HEK293 (cell line): ENCODE measurements at regions of chr11 and their contacts with region 1.

Region 1: DNA sequence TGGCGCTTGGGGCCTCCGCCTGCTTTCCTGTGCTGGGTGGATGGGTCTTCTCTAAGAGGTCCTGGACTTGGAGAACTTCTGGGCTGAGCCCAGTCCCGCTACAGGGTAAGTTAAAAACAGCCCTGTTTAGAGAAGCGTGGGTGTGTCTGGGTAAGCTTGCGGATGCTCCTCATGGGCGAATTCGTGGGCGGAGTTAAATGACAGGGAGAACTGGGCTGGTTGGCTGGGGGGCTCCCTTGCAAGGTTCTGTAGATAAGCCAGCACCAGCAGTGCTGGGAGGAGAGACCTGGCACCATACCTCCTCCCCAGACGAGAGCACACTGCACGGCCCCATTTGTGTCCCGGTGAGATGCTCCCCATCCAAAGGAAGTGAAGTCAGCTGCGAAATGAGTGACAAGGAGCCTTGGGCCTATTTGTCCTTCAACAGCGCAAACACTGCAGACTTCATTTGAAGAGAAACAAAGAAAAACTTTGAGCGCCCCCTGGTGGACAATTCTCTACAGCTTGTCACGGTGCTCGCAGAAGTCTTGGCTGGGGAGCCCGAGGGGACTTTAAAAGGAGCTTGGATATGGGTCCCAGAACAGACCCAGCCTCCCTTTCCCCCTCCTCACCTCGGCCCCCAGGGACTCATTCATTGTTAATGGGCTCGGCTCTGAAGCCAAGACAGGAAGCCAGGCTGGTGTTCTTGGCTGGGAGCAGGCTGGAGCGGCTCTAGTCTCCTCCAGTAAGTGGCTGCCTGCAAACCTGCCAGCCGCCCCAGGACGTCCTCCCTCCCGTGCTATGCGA is 39.5 kb downstream of the TP53I11 start:
- H3K4me3 ChIP-seq: no peak overlapping the region
- H3K27ac ChIP-seq: no peak overlapping the region
- H3K4me1 ChIP-seq: no peaks in the 10 kb centered on the region
- CTCF ChIP-seq: peak; percentile 37; the same call in 1 of the 2 replicates

Region 2: GRCh38 chr11:44556735-44557409 is 354.4 kb before region 1 on chr11:
- CTCF ChIA-PET with region 1: interaction called, 15 read pairs
- POLR2A ChIA-PET with region 1: no interaction called
- H3K4me3 ChIP-seq: no peak overlapping the region
- H3K27ac ChIP-seq: no peak overlapping the region
- H3K4me1 ChIP-seq: no peaks in the 10 kb centered on the region
- CTCF ChIP-seq: peak; percentile 60

Region 3: DNA sequence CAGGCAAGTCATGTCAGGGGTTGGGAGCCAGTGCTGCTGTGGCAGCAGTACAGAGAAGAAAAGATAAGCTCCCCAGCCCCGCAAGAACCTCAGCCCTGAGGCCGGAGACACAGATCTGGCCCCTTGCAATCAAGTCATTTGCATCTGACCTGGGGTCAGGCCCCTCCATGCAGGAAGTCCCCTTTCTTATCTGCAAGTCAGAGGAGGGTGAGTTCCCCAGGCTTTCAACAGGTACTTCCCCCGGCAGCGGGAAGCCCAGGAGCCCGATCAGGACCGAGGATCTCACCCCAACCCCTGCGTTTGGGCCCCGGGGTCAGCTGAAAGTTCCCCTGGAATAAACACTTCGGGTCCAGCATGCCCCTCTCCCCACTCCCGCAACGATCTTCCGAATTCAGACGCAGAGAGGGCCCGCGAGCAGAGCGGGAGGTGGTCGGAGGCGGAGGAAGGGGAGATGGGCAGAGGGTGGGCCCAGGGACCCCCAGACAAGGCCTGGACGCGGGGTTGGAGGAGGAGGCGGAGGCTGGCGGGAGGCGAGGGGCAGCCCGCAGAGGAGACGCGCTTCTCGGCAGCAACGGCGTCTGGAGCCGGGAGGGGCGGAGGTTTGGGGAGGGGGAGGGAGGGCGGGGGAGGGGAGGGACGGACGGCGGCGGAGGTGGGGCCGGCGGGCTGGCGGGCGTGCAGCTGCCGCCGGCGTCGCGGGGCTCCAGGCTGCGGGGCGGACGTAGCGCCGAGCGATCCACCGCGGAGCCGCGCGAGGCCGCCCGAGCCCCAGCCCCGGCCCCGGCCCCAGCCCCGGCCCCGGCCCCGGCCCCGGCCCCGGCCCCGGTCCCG is 184.7 kb before region 1 on chr11 and contains the start of gene TSPAN18:
- CTCF ChIA-PET with region 1: interaction called, 10 read pairs
- POLR2A ChIA-PET with region 1: no interaction called
- H3K4me3 ChIP-seq: peak within 1 kb of the TSS; percentile 61
- H3K27ac ChIP-seq: peak within 1 kb of the TSS; percentile 31; the same call in 1 of the 2 replicates
- H3K4me1 ChIP-seq: peaks cover 3% of the 10 kb centered on the region; the same call in 1 of the 2 replicates
- CTCF ChIP-seq: no peak

Region 4: GRCh38 chr11:44893846-44894617 is 17.2 kb before region 1 on chr11:
- CTCF ChIA-PET with region 1: interaction called, 12 read pairs
- POLR2A ChIA-PET with region 1: no interaction called
- H3K4me3 ChIP-seq: no peak overlapping the region
- H3K27ac ChIP-seq: no peak overlapping the region
- H3K4me1 ChIP-seq: no peaks in the 10 kb centered on the region
- CTCF ChIP-seq: peak; percentile 76

Region 5: DNA sequence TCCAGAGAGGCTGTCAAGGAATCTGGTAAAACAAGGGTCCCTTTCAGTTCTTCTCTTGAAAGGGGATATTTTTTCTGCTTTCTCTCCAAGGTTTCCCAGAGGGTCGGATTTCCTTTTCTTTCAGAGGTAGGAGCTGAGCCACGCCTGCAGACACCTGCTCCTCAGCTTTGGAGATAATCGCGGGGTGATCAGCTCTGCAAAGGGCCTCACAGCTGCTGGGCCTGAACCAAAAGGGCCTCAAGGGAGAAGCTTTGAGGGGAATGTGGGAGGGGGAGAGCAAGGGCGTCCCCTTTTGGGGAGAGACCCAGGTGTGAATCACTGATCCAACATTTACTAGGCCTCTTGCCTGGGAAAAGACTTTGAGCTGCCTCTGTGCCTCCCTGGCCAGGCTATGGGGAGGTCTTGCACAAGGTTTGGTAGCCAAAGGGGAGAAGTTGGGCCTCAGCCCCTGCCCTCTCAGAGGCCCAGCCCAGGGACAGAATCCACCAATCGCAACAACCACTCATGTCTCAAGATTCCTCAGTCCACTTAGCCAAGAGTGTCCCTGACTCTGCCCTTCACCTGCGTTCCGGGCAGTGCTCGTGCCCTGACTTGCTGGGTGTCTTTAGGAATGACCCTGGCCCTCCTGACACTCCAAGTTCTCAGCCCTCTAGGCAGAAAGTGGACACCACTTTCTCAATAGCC is 53.4 kb after region 1 on chr11:
- CTCF ChIA-PET with region 1: no interaction called
- POLR2A ChIA-PET with region 1: no interaction called
- H3K4me3 ChIP-seq: no peak overlapping the region
- H3K27ac ChIP-seq: no peak overlapping the region
- H3K4me1 ChIP-seq: no peaks in the 10 kb centered on the region
- CTCF ChIP-seq: no peak

Region 6: DNA sequence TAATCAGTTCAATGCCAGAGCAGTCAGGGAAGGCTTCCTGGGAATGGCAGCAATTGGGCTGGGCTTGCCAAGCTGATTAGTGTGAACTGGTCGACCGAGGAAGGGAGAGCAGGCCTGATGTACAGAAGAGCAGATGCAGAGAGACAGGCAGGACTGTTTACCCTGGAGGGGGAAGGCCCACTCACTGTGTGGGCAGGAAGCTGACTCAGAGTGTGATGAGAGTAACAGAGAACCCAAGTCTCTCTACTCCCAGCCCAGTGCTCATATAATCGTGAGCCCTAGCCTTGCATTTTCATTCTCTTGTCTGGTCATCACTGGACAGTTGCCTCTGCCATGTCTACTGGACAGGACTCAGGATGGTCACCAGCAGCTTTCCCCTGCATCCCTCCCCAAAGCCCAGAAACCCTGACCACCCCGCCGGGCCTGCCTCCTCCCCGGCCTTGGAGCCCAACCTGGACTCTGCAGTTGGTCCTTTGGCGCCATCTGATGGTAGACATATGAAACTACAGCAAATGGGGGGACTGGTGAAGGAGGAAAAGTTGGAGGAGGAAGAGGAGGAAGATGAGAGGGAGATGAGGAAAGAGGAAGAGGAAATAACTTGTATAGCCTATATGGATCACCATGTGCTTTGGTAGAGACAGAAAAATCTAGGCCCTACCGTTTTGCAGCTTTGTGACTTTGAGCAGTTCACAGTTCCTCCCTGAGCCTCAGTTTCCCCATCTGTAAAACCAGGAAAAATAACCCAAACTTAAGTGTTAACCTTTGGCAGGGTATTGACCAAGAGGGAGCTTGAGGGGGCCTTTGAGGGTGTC is 191.8 kb after region 1 on chr11:
- CTCF ChIA-PET with region 1: interaction called, 11 read pairs
- POLR2A ChIA-PET with region 1: no interaction called
- H3K4me3 ChIP-seq: no peak overlapping the region
- H3K27ac ChIP-seq: no peak overlapping the region
- H3K4me1 ChIP-seq: no peaks in the 10 kb centered on the region
- CTCF ChIP-seq: peak; percentile 62